SK-N-SH (cell line): ENCODE measurements at regions of chr14 and their contacts with region 1.

Region 1: DNA sequence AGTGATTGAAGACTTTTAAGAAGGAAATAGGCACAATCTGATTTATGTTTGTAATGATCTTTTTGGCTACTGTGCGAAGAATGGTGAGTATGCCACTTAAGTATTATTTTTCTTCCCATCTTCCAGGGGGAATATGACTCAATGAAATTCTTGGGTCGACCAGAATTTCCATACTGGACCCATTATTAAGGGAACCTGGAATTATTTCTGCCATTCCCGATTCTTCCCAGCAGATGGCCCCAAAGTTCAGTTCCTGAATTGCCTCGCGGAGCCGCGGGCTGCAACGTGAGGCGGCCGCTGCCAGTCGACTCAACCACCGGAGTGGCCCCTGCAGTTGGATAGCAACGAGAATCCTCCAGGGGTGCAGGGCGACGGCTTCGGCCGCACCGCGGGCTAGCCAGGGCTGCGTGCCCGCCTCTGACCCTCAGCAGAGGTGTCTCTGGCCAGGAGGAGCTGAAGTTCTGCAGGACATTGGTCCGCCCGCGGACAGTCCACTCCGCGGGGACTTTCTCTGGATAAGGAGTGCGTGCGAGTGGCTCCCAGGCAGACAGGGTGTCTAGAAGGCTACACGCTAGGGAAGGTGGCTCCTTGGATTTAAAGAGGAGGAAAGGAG is 628 bp upstream of the TSHR start:
- DNase-seq: peak; percentile 81
- H3K4me3 ChIP-seq: peak overlapping the region; percentile 54 to 70
- H3K27ac ChIP-seq: no peak overlapping the region
- H3K4me1 ChIP-seq: peaks cover 0 to 2% of the 10 kb centered on the region in 2 experiments; a peak in 1 of 4 replicates
- H3K27me3 ChIP-seq: peaks cover 25% of the 10 kb centered on the region
- CTCF ChIP-seq: peak; percentile 77
- EP300 ChIP-seq: peak in 1 of 2 experiments; percentile 34; a peak in 1 of 4 replicates
- RAD21 ChIP-seq: peak; percentile 85

Region 2: DNA sequence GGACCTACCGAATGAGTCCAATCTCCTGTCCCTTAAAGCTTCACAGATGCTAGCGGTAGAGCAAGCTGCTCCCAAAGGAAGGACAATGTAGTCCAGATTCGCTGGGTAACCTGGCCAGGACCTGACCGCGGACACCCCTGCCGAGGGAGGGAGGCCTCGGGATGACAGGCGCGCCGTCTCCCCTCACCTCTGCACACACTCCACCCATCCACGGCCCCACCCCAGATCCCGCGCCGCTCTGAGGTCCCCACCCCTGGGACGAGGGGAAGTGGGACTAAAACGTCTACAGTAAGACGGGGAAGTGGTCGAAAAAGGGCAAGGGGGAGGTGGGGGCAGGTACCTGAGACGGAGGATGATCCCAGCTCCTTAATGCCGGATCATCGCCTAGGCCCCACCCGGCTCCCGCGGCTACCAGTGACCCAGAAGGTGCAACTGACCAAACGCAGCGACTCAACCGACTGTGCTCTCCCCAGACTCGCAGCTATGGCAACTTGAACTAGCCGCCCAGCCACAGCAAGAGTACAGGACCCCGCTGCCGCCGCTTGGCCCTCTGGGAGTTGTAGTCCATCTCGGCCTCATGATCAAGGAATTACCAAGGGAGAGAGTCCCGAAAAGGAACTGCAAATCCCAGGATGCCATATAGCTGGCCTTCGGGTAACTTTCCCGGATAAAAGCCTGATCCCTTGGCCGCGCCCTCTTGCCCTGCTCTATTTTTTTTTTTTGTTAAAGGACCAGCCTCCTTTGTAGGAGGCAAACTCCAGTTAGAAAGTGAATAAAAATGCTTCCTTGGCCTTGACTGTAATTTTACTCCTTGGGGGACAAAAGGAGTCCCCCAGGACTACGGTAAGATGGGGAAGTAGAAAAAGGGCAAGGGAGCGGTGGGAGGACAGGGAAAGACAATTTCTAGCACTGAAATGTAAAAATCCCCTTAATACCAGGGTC is 13.3 kb before region 1 on chr14 and contains the start of gene CEP128:
- CTCF ChIA-PET with region 1: interaction called, 12 read pairs
- POLR2A ChIA-PET with region 1: interaction called, 3 read pairs
- DNase-seq: peak; percentile 87
- H3K4me3 ChIP-seq: peak within 1 kb of the TSS; percentile 84
- H3K27ac ChIP-seq: peak within 1 kb of the TSS; percentile 23 to 63; a peak in 2 of 4 replicates
- H3K4me1 ChIP-seq: peaks cover 0 to 8% of the 10 kb centered on the region in 2 experiments; a peak in 2 of 4 replicates
- H3K27me3 ChIP-seq: no peaks in the 10 kb centered on the region
- CTCF ChIP-seq: no peak
- EP300 ChIP-seq: no peak
- RAD21 ChIP-seq: no peak
- polyA plus RNA-seq, gene CEP128: 1.2 and 1.3 TPM in 2 replicates

Region 3: DNA sequence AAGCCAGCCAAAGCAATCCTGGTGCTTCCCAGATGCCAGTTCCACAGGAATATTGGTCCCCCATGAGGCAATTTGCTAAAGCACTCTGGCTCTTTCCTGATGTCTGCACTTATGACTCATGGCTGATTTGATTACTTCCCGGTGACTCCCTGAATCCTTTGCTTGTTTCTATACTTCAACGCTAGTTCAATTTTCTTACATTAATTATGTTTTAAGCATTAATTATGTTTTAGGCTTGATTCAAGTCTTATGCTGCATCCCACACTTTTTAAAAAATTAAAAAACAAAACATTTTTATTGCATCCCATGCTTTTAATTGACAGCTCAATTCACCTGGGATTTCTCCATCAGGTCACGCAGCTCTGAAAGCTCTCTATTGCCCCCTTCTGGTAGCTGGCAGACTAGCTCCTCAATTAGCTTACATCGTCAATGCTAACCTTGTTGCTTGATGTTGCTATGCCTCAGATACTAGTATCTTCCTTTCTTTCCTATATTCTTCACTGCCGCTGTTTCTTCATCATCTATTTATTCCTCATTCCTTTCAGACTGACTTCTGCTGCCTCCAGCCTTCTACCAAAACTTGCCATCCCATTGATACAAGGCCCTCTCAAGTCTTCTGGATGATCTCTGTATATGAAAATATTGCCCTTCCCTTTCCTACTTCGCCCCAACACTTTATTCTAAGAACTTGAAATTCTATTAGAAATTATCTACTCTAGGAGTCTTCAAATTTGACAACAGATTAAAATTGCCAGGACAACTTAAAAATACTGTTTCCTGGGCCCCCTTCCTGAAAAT is 32.6 kb after region 1 on chr14:
- CTCF ChIA-PET with region 1: interaction called, 42 read pairs
- POLR2A ChIA-PET with region 1: no interaction called
- DNase-seq: peak; percentile 69
- H3K4me3 ChIP-seq: peak overlapping the region in 1 of 2 experiments; percentile 42; a peak in 1 of 4 replicates
- H3K27ac ChIP-seq: no peak overlapping the region
- H3K4me1 ChIP-seq: no peaks in the 10 kb centered on the region; a peak in 1 of 4 replicates
- H3K27me3 ChIP-seq: peaks cover 13% of the 10 kb centered on the region; the same call in 1 of the 2 replicates
- CTCF ChIP-seq: peak; percentile 97
- EP300 ChIP-seq: no peak
- RAD21 ChIP-seq: peak; percentile 85

Region 4: GRCh38 chr14:80996049-80996901 is 41.5 kb after region 1 on chr14:
- CTCF ChIA-PET with region 1: interaction called, 13 read pairs
- POLR2A ChIA-PET with region 1: no interaction called
- DNase-seq: peak; percentile 50
- H3K4me3 ChIP-seq: peak overlapping the region in 1 of 2 experiments; percentile 36; a peak in 1 of 4 replicates
- H3K27ac ChIP-seq: no peak overlapping the region
- H3K4me1 ChIP-seq: no peaks in the 10 kb centered on the region
- H3K27me3 ChIP-seq: peaks cover 8% of the 10 kb centered on the region; the same call in 1 of the 2 replicates
- CTCF ChIP-seq: peak; percentile 80
- EP300 ChIP-seq: no peak
- RAD21 ChIP-seq: peak; percentile 65